ENCODE measurements at regions of chr1 and their contacts with region 1.

Region 1: GRCh38 chr1:167533851-167534300 is 15.5 kb upstream of the CD247 start:
- DNase-seq: peak; percentile 78
- H3K4me3 Mint-ChIP-seq: no peak overlapping the region
- H3K27ac Mint-ChIP-seq: no peak overlapping the region
- H3K4me1 Mint-ChIP-seq: peaks cover 4% of the 10 kb centered on the region
- H3K27me3 Mint-ChIP-seq: peaks cover 2% of the 10 kb centered on the region

Region 2: GRCh38 chr1:167066333-167067122 is 467.3 kb before region 1 on chr1:
- CTCF ChIA-PET with region 1: interaction called, 18 read pairs
- intact Hi-C with region 1: loop called (anchors 1 kb)
- DNase-seq: peak; percentile 82
- H3K4me3 Mint-ChIP-seq: no peak overlapping the region
- H3K27ac Mint-ChIP-seq: no peak overlapping the region
- H3K4me1 Mint-ChIP-seq: peaks cover 2% of the 10 kb centered on the region
- H3K27me3 Mint-ChIP-seq: no peaks in the 10 kb centered on the region

Region 3: GRCh38 chr1:167401260-167401873 is 132.5 kb before region 1 on chr1:
- CTCF ChIA-PET with region 1: interaction called, 44 read pairs
- intact Hi-C with region 1: loop called (anchors 1 kb)
- DNase-seq: peak; percentile 70
- H3K4me3 Mint-ChIP-seq: no peak overlapping the region
- H3K27ac Mint-ChIP-seq: no peak overlapping the region
- H3K4me1 Mint-ChIP-seq: no peaks in the 10 kb centered on the region
- H3K27me3 Mint-ChIP-seq: no peaks in the 10 kb centered on the region

Region 4: DNA sequence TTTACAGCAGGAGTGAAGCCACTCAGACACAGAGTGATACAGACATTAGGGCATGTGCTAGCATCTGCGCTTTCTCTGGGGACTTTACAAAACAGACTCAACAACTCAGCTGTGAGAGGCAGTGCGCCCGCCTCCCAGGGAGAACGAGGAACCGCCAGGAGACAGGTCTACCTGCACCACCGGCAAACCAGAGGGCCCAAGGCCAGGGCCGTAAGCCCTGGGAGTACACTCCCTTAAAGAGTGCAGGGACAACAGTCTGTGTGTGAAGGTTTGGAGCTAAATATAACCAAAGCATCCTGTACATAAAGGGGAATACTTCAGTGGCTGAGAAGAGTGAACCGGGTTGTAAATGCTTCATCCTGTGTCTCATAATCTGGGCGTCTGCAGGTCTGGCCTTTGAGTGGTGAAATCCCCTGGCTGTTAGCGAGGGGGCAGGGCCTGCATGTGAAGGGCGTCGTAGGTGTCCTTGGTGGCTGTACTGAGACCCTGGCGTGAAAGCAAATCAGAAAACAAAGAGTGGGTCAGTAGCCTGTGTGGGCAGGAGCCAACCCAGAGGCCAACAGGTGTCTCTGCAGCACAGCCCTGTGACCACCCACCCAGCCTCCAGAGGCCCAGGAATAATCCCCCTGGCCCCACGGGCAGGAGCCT is 102.5 kb before region 1 on chr1:
- CTCF ChIA-PET with region 1: interaction called, 17 read pairs
- intact Hi-C with region 1: no loop called
- DNase-seq: no peak
- H3K4me3 Mint-ChIP-seq: no peak overlapping the region
- H3K27ac Mint-ChIP-seq: peak overlapping the region; percentile 56
- H3K4me1 Mint-ChIP-seq: peaks cover 56% of the 10 kb centered on the region
- H3K27me3 Mint-ChIP-seq: no peaks in the 10 kb centered on the region

Region 5: GRCh38 chr1:167454894-167455785 is 78.7 kb before region 1 on chr1:
- CTCF ChIA-PET with region 1: interaction called, 11 read pairs
- intact Hi-C with region 1: no loop called
- DNase-seq: peak; percentile 83
- H3K4me3 Mint-ChIP-seq: peak overlapping the region; percentile 79
- H3K27ac Mint-ChIP-seq: peak overlapping the region; percentile 87
- H3K4me1 Mint-ChIP-seq: peaks cover 67% of the 10 kb centered on the region
- H3K27me3 Mint-ChIP-seq: no peaks in the 10 kb centered on the region

Region 6: DNA sequence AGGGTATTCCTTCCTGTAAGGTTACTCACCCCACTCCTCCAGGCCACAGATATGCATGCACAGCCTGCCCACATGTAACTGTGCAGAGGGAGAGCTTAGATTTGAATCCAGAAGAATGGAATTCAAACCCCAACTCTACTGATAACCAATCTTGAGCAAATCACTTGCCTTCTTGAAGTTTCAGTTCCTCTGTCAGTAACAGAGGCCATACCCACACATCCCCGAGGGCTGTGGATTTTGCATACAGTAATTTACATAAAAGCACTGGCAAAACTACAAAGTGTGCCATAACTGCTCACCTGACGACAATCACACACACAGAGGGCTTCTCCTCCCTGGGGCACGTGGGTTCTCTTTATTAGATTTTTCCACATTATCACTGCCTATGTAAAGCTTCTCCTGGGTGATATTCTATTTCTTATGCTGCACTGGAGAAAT is 34.2 kb before region 1 on chr1:
- CTCF ChIA-PET with region 1: interaction called, 12 read pairs
- intact Hi-C with region 1: no loop called
- DNase-seq: peak; percentile 59
- H3K4me3 Mint-ChIP-seq: peak overlapping the region; percentile 10
- H3K27ac Mint-ChIP-seq: peak overlapping the region; percentile 87
- H3K4me1 Mint-ChIP-seq: peaks cover 97% of the 10 kb centered on the region
- H3K27me3 Mint-ChIP-seq: no peaks in the 10 kb centered on the region

Region 7: DNA sequence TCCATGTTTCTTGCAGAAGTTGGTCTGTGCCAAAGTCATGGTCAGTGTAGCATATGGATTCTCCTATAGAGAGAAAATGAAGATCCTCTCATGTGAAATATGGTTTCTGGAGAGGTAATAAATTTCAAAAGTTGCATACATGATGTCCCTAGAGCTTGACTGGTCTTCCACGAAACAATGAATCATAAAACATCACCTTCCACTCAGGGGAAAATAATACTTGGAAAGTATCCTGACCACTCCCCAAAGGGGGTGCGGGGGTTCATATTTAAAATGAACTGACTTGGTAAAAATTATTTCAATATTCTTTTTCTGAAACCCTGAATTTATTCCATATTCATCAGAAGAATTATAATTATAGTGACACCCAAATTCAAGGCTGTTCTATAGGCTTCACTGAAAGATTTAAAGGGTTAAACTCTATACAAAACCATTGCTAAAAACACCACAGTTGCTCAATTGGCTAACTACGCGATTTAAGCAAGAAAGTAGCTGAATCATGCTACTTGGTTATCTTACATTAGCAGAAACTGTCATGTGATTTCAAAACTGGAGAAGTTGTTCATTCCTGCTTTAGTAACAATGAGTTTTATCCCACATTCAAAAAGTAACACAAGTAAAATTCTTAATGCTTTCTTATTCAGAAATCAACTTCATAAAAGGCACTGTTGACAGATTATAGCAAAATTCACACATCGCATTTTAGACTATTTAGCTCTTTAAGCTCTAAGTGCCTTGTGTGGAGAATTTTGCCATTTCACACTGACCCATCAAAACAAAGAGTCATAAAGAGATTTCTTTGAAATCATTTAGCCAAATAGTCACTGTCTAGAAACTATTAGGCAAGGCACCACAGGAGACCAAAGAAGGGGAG is 14.4 kb after region 1 on chr1:
- CTCF ChIA-PET with region 1: interaction called, 14 read pairs
- intact Hi-C with region 1: no loop called
- DNase-seq: no peak
- H3K4me3 Mint-ChIP-seq: no peak overlapping the region
- H3K27ac Mint-ChIP-seq: no peak overlapping the region
- H3K4me1 Mint-ChIP-seq: peaks cover 31% of the 10 kb centered on the region
- H3K27me3 Mint-ChIP-seq: no peaks in the 10 kb centered on the region

Measured in activated naive CD4-positive, alpha-beta T cell treated with anti-CD3 and anti-CD28 coated beads for 36 hours (primary cell).